ENCODE measurements at regions of chr10 and their contacts with region 1.

Region 1: DNA sequence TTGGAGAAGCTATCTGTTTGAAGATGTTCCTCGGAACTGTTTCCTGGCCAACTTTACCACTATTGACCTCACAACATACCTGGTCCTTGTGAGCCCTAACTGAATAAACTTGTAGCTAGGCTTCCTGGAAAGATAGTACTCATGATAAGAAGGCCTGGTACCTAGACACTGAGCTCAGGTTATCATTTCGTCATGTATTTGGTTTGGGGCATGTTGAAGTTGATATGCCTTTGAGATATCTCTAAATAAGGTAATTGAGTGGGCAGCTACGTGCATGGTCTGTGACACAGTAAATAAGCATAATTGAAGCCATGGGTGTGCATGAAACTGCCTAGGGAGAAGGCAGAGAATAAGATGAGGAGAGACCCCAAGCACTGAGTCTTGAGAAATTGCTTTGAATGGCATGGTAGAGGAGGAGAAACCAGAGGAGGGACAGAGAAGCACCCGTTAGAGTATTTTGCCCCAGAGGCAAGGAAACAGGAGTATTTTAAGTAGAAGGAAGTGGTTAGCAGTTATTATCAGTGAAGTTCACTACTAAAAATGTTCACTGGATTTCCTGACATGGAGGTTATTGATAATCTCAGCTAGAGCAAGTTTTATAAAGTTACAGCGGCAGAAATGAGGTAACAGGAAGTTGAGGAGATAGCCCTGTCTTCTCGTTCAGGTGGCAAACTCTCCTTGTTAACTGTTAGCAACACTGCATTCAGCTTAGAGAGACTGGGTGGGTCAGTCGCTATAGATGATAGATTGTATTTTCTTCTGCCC is 55.6 kb downstream of the CC2D2B start:
- ATAC-seq: no peak
- H3K4me3 ChIP-seq: no peak overlapping the region
- H3K27ac ChIP-seq: no peak overlapping the region
- H3K4me1 ChIP-seq: no peaks in the 10 kb centered on the region

Region 2: GRCh38 chr10:95693668-95694534 is 269.5 kb before region 1 on chr10 and contains the start of gene TCTN3:
- in situ Hi-C with region 1: loop called in 1 of 9 experiments (anchors 25 kb)
- ATAC-seq: peak; percentile 98 to 100 (median 99)
- H3K4me3 ChIP-seq: peak within 1 kb of the TSS; percentile 71 to 91 (median 73)
- H3K27ac ChIP-seq: peak within 1 kb of the TSS; percentile 28 to 64
- H3K4me1 ChIP-seq: peaks cover 8 to 13% of the 10 kb centered on the region in 2 donors
- total RNA-seq, gene TCTN3: 21.9 to 62.4 (median 30.4) TPM